K562 (cell line): ENCODE measurements at regions of chr22 and their contacts with region 1.

Region 1: GRCh38 chr22:24768537-24769374 is 5.8 kb downstream of the PIWIL3 start:
- DNase-seq: peak; percentile 38 to 67 (median 47)
- ATAC-seq: peak; percentile 96
- H3K4me3 ChIP-seq: no peak overlapping the region
- H3K27ac ChIP-seq: no peak overlapping the region
- H3K4me1 ChIP-seq: peaks cover 0 to 4% of the 10 kb centered on the region in 2 experiments; a peak in 2 of 5 replicates
- H3K27me3 ChIP-seq: peaks cover 0 to 7% of the 10 kb centered on the region in 2 experiments; a peak in 2 of 5 replicates
- CTCF ChIP-seq: peak; percentile 61 to 75 (median 68)
- EP300 ChIP-seq: no peak
- POLR2A ChIP-seq: no peak
- RAD21 ChIP-seq: peak; percentile 44 to 75

Region 2: GRCh38 chr22:24410110-24410856 is 358.5 kb before region 1 on chr22:
- CTCF ChIA-PET with region 1: no interaction called
- POLR2A ChIA-PET with region 1: no interaction called
- in situ Hi-C with region 1: loop called (anchors 10 kb)
- intact Hi-C with region 1: no loop called
- DNase-seq: no peak
- ATAC-seq: no peak
- H3K4me3 ChIP-seq: no peak overlapping the region
- H3K27ac ChIP-seq: no peak overlapping the region
- H3K4me1 ChIP-seq: peaks cover 10 to 16% of the 10 kb centered on the region in 2 experiments; a peak in 4 of 5 replicates
- H3K27me3 ChIP-seq: no peaks in the 10 kb centered on the region
- CTCF ChIP-seq: no peak
- EP300 ChIP-seq: no peak
- POLR2A ChIP-seq: no peak
- RAD21 ChIP-seq: no peak

Region 3: DNA sequence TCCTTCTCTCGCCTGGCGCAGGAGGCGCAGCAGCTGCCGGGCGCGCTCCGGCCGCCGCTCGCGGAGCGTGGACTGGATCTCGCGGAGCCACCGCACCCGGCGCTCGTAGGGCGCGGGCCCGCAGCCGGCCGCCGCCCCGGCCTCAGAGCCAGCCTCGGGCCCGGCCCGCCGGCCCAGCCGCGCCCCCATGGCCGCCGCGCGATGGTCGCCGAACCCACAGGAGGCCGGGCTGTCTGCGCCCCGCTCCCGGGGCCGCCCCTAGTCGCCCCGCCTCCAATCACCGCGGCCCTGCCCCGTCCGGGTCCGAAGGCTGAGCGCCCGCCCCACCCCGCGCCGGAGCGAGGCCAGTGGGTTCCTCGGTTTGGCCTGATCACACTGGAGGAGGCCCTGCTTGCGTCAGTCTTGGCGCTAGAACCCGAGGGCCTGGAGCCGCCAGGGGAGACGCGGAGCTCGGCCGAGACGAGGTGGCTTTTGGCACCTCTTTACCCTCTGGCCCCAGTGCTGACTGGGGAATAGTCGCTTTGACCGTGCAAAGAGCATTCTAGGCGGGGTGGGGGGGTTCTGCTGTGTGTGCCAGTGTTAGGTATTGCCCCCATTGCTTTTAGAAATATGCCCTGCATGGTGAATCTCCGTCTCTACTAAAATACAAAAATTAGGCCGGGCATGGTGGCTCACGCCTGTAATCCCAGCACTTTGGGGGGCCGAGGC is 175.8 kb before region 1 on chr22 and contains the start of gene LRRC75B:
- CTCF ChIA-PET with region 1: no interaction called
- POLR2A ChIA-PET with region 1: no interaction called
- in situ Hi-C with region 1: no loop called
- intact Hi-C with region 1: no loop called
- DNase-seq: peak; percentile 70 to 82 (median 80)
- ATAC-seq: peak; percentile 95
- H3K4me3 ChIP-seq: peak within 1 kb of the TSS; percentile 44
- H3K27ac ChIP-seq: peak within 1 kb of the TSS; percentile 48; the same call in 1 of the 3 replicates
- H3K4me1 ChIP-seq: peaks cover 0 to 22% of the 10 kb centered on the region in 2 experiments; a peak in 2 of 5 replicates
- H3K27me3 ChIP-seq: no peaks in the 10 kb centered on the region
- CTCF ChIP-seq: no peak
- EP300 ChIP-seq: no peak
- POLR2A ChIP-seq: peak; percentile 51; the same call in 1 of the 2 replicates
- RAD21 ChIP-seq: no peak
- polyA plus RNA-seq, gene LRRC75B: 0.10 TPM in 1 of 2 experiments, not detected in the other

Region 4: GRCh38 chr22:24744638-24745037 is 24.1 kb before region 1 on chr22:
- CTCF ChIA-PET with region 1: no interaction called
- POLR2A ChIA-PET with region 1: no interaction called
- in situ Hi-C with region 1: no loop called
- intact Hi-C with region 1: no loop called
- DNase-seq: no peak
- ATAC-seq: no peak
- H3K4me3 ChIP-seq: no peak overlapping the region
- H3K27ac ChIP-seq: no peak overlapping the region
- H3K4me1 ChIP-seq: no peaks in the 10 kb centered on the region
- H3K27me3 ChIP-seq: no peaks in the 10 kb centered on the region
- CTCF ChIP-seq: no peak
- EP300 ChIP-seq: no peak
- POLR2A ChIP-seq: no peak
- RAD21 ChIP-seq: no peak

Region 5: DNA sequence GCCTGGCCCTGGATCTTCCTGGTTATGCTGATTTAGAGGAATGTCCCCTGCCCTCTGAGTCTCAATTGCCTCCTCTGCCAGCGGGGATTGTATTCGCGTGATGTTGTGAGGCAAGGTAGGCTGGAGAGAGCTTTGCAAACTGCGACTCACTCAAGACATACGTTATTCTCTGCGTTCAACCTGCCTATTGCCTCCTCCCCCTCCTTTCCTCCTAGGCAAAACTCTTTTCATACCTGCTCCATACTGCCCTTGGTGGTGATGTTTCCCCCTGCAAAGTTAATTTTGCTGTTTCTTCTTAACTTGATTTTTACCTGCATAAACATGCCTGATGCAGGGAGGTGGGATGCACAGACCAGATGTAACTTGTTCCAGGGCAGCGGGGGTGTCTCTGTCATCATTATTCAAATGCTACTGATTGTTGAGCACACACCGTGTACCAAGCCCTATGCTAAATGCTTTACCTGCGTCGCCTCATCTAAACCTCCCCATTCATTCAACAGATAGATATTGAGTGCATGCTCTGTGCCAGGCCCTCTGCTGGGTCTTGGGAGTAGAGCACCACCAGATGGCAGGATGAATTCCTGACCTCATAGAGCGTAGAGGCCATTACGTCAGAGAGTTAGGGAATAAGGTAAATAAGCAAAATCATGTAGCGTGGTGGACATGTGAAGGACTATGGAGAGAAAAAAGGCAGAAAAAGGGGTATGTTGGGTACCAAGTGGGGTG is 66.3 kb after region 1 on chr22:
- CTCF ChIA-PET with region 1: no interaction called
- POLR2A ChIA-PET with region 1: interaction called, 5 read pairs
- in situ Hi-C with region 1: no loop called
- intact Hi-C with region 1: loop called (anchors 5 kb)
- DNase-seq: peak in 1 of 4 experiments; percentile 9
- ATAC-seq: peak; percentile 65; the same call in 2 of the 3 replicates
- H3K4me3 ChIP-seq: no peak overlapping the region
- H3K27ac ChIP-seq: no peak overlapping the region
- H3K4me1 ChIP-seq: no peaks in the 10 kb centered on the region; a peak in 1 of 5 replicates
- H3K27me3 ChIP-seq: peaks cover 0 to 15% of the 10 kb centered on the region in 2 experiments; a peak in 2 of 5 replicates
- CTCF ChIP-seq: peak in 2 of 3 experiments; percentile 28 to 43; a peak in 3 of 6 replicates
- EP300 ChIP-seq: no peak
- POLR2A ChIP-seq: no peak
- RAD21 ChIP-seq: no peak

Region 6: DNA sequence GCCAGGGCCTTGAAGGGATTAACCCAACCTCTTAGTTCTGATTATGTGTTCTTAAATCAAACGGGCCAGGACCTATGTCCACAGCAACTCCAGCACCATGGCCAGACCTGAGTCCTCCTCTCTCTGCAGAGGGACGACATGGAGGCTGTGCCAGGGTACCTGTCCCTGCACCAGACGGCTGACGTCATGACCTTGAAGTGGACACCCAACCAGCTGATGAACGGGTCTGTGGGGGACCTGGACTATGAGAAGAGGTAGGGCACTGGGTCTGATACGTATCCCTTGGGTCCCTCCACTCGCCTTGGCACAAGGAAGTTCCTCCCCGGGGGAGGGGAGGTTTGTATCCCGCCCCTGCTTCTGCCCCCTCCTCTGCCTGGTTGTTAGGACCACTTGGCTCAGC is 90.8 kb after region 1 on chr22:
- CTCF ChIA-PET with region 1: no interaction called
- POLR2A ChIA-PET with region 1: no interaction called
- in situ Hi-C with region 1: loop called (anchors 5 kb)
- intact Hi-C with region 1: no loop called
- DNase-seq: no peak
- ATAC-seq: no peak
- H3K4me3 ChIP-seq: no peak overlapping the region
- H3K27ac ChIP-seq: no peak overlapping the region
- H3K4me1 ChIP-seq: no peaks in the 10 kb centered on the region
- H3K27me3 ChIP-seq: peaks cover 0 to 18% of the 10 kb centered on the region in 2 experiments; a peak in 1 of 5 replicates
- CTCF ChIP-seq: no peak
- EP300 ChIP-seq: no peak
- POLR2A ChIP-seq: no peak
- RAD21 ChIP-seq: no peak

Region 7: GRCh38 chr22:25057013-25057881 is 288.5 kb after region 1 on chr22:
- CTCF ChIA-PET with region 1: interaction called, 3 read pairs
- POLR2A ChIA-PET with region 1: no interaction called
- in situ Hi-C with region 1: no loop called
- intact Hi-C with region 1: loop called (anchors 2 kb)
- DNase-seq: peak; percentile 52 to 60 (median 56)
- ATAC-seq: peak; percentile 95
- H3K4me3 ChIP-seq: no peak overlapping the region
- H3K27ac ChIP-seq: no peak overlapping the region
- H3K4me1 ChIP-seq: no peaks in the 10 kb centered on the region
- H3K27me3 ChIP-seq: peaks cover 0 to 6% of the 10 kb centered on the region in 2 experiments; a peak in 1 of 5 replicates
- CTCF ChIP-seq: peak; percentile 78 to 84 (median 84)
- EP300 ChIP-seq: no peak
- POLR2A ChIP-seq: no peak
- RAD21 ChIP-seq: peak; percentile 41 to 65